ENCODE measurements at regions of chr11 and their contacts with region 1.

Region 1: GRCh38 chr11:64887757-64888405 is 9.5 kb upstream of the EHD1 start:
- DNase-seq: peak; percentile 92
- ATAC-seq: peak; percentile 83
- H3K4me3 Mint-ChIP-seq: peak overlapping the region; percentile 64
- H3K27ac Mint-ChIP-seq: peak overlapping the region; percentile 92
- H3K4me1 Mint-ChIP-seq: peaks cover 35% of the 10 kb centered on the region
- H3K27me3 Mint-ChIP-seq: no peaks in the 10 kb centered on the region

Region 2: DNA sequence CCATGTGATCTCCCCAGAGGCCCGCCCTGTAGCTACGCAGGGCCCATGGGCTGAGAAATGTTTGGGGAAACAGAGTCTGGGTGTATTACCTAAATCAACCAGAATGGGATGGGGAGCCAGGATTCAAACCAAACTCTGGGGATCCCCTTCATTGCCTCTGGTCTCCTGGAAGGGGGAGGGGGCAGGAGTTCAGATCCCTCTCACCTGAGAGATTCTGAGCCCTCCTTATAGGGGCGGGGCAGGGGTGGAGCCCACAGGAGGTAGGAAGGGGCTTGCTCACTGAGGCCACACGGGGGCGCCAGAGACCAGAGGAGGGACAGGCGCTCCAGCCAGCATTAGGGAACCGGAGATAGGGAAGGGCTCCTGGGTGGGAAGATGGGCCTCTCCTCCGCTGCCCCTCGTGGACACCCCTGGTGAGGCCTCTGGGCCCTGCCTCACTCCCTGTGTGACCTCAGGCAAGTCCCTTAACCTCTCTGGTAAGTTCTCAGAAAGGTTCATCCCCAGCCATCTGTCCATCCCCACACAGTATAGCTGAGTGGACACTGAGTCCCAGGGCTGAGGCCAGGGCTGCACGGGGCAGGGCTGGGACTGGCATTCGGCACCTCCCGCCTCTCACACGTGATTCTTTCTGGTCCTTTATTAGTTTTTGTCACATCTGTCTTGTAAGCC is 40.7 kb before region 1 on chr11:
- CTCF ChIA-PET with region 1: interaction called, 377 read pairs
- POLR2A ChIA-PET with region 1: interaction called, 4 read pairs
- intact Hi-C with region 1: loop called in 1 of 2 experiments (anchors 1 kb)
- DNase-seq: peak; percentile 96
- ATAC-seq: peak; percentile 75
- H3K4me3 Mint-ChIP-seq: no peak overlapping the region
- H3K27ac Mint-ChIP-seq: no peak overlapping the region
- H3K4me1 Mint-ChIP-seq: peaks cover 54% of the 10 kb centered on the region
- H3K27me3 Mint-ChIP-seq: no peaks in the 10 kb centered on the region

Region 3: GRCh38 chr11:64905516-64906313 is 17.8 kb after region 1 on chr11:
- CTCF ChIA-PET with region 1: no interaction called
- POLR2A ChIA-PET with region 1: no interaction called
- intact Hi-C with region 1: no loop called
- DNase-seq: no peak
- ATAC-seq: no peak
- H3K4me3 Mint-ChIP-seq: no peak overlapping the region
- H3K27ac Mint-ChIP-seq: no peak overlapping the region
- H3K4me1 Mint-ChIP-seq: peaks cover 9% of the 10 kb centered on the region
- H3K27me3 Mint-ChIP-seq: no peaks in the 10 kb centered on the region